ENCODE measurements at regions of chr15 and their contacts with region 1.

Region 1: GRCh38 chr15:82540055-82540983 is at the start of gene RPS17:
- DNase-seq: peak; percentile 99
- total RNA-seq, gene RPS17: 1,284 to 1,450 TPM

Region 2: GRCh38 chr15:81410318-81410753 is 1130.0 kb before region 1 on chr15:
- intact Hi-C with region 1: loop called in 1 of 2 experiments (anchors 5 kb)
- DNase-seq: no peak